Head of caudate nucleus (tissue), 42 donors: ENCODE measurements at regions of chr2 and their contacts with region 1.

Region 1: DNA sequence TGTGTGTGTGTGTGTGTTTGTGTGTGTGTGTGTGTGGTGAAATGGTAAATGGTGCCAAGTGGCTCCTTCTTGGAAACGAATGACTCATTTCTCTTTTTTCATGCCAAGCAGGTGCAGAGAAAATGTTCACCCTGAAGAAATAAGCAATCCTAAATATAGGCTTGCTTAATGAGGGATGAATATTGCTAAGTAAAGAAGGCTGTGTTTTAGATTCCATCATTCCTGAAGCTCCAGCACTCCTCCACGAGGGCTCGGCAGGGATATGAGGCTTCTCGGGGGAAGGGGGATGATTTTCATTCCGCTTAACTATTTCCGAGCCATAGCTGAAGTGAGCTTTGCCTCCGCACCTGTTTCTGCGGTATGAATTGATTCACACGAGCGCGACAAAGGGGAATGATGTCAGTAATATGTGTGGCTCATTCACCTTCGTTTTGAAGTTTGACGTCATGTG is 72.9 kb downstream of the TSN start:
- DNase-seq: peak in 26 of 42 donors; percentile 8 to 59 (median 30)

Region 2: DNA sequence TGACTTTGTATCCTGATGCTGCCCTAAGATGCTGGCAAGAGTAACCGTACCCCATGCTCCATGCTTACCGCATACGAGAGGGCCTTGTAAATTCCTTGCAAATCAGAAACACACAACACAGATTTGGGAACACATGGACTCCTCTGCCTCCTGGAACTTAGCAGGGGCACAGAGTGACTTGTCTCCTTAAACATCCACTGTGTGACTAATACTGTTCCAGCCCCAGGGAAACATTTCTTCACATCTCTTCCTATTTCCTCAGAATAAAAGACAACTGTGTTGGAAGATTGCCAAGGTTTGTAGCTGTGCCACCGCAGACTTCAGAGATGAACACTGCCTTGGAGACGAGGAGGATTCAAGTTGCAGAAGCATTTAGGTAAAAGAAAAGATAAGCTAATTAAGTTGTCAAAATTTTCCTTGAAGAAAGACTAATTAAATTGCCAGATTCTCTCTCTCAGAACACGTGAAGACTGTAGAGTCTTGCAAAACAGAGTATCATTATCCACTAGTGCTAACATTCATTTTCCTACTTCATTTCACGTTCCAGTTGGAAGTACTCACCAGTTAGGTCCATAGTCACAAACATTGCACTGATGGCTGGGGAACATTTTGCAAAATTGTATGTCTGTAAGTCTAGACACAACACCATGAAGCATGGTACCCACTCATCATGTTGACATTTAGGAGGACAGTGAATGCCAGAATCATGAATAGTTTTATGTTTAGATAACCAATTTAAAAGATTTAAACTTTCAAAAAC is 115.9 kb after region 1 on chr2:
- intact Hi-C with region 1: loop called (anchors 10 kb)
- DNase-seq: peak in 22 of 42 donors; percentile 5 to 64 (median 32)

Region 3: DNA sequence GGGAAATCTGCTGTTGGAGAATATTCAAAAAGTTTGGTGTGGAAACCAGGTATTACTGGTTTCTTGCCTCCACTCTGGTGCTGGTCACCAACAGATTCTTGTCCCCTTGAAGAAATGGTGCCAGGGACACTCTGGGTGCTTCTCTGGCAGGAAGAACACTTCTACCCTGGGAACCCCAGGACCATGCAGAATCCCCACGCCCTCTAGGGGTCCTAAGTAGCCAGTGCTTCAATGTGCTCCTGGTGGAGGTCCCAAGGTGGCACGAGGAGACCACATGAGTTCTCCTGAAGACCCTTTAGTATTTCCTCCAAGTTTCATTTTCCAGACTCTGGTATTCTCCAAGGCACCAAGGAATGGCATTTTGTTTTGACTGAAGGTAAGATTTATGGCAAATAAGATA is 307.8 kb after region 1 on chr2:
- intact Hi-C with region 1: no loop called
- DNase-seq: peak in 2 of 42 donors; percentile 23 to 47